ENCODE measurements at regions of chrX and their contacts with region 1.

Region 1: DNA sequence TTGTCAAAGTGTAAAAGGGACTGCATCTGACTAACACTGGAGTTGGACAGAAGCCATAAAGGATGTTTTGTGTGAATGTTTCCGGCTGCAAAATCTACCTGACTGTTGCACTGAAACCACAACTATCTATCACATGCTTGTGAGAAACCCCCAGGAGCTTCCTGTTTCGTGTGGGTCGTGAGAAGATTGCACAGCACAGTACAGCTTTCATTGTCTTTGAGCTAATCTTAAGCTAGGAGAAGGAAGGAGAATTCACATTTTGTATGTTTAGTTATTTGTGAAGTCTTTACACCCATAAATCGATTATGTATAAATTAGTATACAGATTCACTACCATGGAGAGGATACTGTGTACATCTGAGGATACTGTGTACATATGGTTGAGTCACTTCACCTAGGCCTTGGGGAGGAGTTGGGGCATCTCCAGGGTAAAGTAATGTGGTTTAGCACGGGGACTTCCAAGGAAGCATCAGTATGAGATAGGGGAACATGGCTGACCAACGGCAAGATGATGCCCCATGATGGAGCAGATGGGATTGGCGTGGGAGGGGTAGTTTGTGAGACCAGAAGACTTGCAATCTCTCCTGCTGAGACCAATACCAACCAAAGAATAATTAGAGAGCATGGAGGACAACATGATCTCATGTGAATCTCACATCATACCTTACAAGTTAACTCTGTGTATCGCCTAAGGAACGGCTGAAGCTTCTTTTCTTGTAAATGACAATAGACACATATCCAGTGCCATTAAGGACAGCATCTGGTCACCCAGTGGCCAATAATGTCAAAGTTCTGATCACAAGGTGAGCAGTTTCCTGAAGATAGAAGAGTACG is 43.1 kb upstream of the FAM9C start:
- DNase-seq: peak; percentile 90
- H3K4me3 Mint-ChIP-seq: peak overlapping the region; percentile 87
- H3K27ac Mint-ChIP-seq: peak overlapping the region; percentile 100
- H3K4me1 Mint-ChIP-seq: peaks cover 59% of the 10 kb centered on the region
- H3K27me3 Mint-ChIP-seq: no peaks in the 10 kb centered on the region

Region 2: DNA sequence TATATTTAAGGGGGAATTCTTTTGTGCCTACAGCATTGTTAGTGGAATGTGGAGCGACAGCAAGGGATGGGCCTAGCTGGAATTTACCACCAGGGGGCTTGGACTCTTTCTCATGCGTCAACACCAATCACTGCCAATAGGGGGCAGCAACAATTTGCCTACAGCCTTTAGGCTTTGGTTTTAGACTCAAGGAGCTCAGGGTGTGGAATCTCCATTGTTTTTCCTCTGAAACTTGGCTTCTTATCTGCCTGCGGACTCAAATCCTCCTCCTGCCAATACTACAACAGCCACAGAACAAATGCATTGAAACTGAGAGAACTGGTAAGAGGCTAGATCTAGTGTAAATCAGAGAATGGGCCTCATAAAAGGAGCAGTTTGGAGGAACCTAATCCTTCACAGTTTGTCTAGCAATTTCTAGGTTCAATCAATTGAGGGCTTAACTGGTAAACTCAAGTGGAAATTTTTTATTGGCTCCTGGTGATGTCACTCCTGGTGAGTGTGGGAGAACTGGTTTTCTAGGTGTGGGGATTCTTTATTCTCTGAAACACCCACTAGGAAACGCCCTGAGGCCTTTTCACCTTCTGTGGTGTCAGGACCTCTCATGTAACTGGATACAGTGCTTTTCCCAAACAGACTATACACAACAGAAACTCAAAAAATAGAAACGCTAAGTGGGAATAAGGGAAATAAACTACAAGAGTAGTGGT is 140.5 kb before region 1 on chrX:
- intact Hi-C with region 1: loop called (anchors 1 kb)
- DNase-seq: peak; percentile 92
- H3K4me3 Mint-ChIP-seq: peak overlapping the region; percentile 66
- H3K27ac Mint-ChIP-seq: peak overlapping the region; percentile 96
- H3K4me1 Mint-ChIP-seq: peaks cover 48% of the 10 kb centered on the region
- H3K27me3 Mint-ChIP-seq: no peaks in the 10 kb centered on the region

Region 3: DNA sequence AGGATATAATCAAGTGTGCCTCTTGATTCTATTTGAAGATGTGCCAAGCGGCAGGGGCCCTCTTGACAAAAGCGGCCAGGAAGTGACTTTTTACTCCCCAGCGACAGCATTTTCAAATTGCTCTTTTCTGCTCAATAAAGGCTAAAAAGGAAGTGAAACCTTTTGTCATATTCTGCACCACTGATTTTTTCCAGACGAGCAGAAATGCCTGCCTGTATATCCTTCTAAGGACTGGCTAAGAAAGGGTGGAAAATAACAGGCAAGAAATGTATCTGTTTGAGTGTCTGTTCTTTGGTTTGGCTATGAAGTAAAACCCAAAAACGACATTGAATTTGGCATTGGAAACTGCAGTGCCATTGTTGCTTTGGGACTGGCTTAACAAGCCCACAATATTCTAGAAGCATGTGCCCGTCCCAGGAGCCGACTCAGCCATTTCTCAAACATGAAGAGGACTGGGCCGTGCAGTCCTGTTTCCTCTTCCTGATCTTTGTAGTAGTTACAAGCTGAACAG is 87.2 kb before region 1 on chrX:
- intact Hi-C with region 1: loop called (anchors 1 kb)
- DNase-seq: peak; percentile 78
- H3K4me3 Mint-ChIP-seq: peak overlapping the region; percentile 75
- H3K27ac Mint-ChIP-seq: peak overlapping the region; percentile 95
- H3K4me1 Mint-ChIP-seq: peaks cover 55% of the 10 kb centered on the region
- H3K27me3 Mint-ChIP-seq: no peaks in the 10 kb centered on the region

Region 4: DNA sequence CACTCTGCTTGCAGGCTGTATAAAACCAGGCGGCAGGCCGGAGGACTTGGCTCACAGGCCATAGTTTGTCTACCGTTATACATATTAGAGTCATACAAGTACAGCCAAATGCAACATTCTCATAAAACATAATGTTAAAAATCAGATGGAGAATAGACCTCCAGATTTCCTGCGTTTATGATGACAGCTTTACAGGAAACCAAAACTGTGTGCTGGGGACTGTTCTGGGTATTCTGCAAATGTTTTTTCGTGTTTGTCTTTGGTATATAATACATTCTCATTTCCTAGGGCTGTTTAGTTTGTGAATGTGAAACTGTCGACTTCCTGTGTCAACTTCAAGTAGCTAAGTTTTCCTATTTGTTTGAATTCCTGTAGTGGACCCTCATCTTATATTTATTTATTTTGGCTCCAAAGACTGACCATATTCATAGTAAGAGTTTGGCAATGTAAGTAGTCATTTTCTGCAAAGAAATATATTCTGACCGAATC is 36.4 kb after region 1 on chrX:
- intact Hi-C with region 1: loop called (anchors 5 kb)
- DNase-seq: peak; percentile 67
- H3K4me3 Mint-ChIP-seq: peak overlapping the region; percentile 63
- H3K27ac Mint-ChIP-seq: peak overlapping the region; percentile 87
- H3K4me1 Mint-ChIP-seq: peaks cover 38% of the 10 kb centered on the region
- H3K27me3 Mint-ChIP-seq: no peaks in the 10 kb centered on the region

Region 5: GRCh38 chrX:13376857-13377549 is 289.5 kb after region 1 on chrX:
- intact Hi-C with region 1: loop called (anchors 5 kb)
- DNase-seq: no peak
- H3K4me3 Mint-ChIP-seq: no peak overlapping the region
- H3K27ac Mint-ChIP-seq: no peak overlapping the region
- H3K4me1 Mint-ChIP-seq: peaks cover 26% of the 10 kb centered on the region
- H3K27me3 Mint-ChIP-seq: no peaks in the 10 kb centered on the region

Region 6: GRCh38 chrX:13734278-13735172 is 647.0 kb after region 1 on chrX and contains the starts of genes OFD1 and TRAPPC2:
- intact Hi-C with region 1: loop called (anchors 10 kb)
- DNase-seq: peak; percentile 97
- H3K4me3 Mint-ChIP-seq: peak within 1 kb of the TSS; percentile 99
- H3K27ac Mint-ChIP-seq: peak within 1 kb of the TSS; percentile 97
- H3K4me1 Mint-ChIP-seq: peaks cover 35% of the 10 kb centered on the region
- H3K27me3 Mint-ChIP-seq: no peaks in the 10 kb centered on the region
- total RNA-seq, gene OFD1: 18.3 and 19.3 TPM in 2 replicates
- total RNA-seq, gene TRAPPC2: 13.6 and 15.4 TPM in 2 replicates